GM18951 (cell line): ENCODE measurements at regions of chr16 and their contacts with region 1.

Region 1: DNA sequence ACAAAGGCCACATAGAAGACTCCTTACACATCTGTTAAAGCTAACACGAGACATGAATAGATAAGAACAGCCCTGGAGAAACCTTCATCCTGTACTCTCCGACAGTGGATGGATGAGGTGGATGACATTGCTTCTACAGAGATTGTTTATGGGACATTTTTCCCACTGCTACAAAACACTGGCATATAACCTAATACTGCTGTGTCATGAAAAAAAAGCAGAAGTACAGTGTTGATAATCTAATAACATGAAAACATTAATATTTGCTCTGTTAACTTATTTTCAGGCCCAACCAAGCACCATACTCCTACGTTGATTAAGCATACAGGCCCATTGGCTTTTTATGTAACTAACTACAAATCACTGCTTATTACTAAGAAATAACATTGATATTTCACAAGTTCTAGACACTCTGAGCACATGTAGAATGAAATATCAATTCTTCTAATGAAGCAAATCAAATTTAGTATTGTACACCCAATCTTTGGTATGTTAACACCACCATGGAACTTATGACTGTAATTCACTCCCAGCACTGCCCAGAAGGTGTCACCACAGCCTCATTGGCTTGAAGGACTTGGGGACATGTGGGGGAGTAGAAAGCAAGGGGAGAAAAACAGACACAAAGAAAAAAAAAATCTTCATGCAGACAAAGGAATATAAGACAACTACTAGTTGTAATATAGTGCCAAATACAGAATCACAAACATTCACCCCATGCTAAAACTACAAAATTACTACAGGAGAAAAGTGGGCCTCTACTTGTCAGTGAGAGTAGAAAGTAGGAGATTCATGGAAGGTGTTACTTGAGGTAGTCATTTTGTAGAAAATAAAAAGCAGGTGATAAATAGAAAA is 330.0 kb upstream of the PMFBP1 start:
- POLR2A ChIP-seq: no peak

Region 2: DNA sequence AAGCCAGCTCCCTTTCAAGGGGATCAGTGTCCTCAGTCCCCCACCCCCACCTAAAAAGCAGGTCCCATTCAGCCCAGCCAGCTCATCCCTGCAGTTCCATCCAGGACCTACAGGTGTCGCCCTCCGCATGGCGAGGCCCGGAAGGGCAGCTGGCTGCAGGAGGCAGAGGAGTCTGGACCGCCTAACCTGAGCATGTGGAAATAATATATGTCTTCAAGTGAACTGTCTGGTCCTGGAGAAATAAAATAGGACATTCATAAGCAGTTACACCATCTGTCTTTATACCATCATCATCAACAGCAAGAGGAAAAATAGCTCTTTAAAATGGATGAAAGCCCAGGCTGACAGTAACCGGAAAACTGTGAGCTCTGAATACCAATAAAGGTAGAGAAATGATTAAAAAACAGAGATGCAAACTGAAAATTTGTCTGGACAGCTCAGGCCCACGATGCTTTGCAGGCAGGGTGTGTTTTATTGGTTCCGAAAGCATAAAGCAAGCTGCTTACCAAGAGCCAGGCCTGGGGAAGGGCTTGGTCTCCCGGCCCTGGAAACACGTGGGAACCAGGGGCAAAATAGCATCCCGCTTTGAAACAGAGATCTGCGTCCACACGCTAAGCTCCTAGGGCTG is 330.8 kb after region 1 on chr16:
- in situ Hi-C with region 1: loop called (anchors 25 kb)
- POLR2A ChIP-seq: no peak